Aorta (tissue), 5 donors: ENCODE measurements at regions of chr10 and their contacts with region 1.

Region 1: GRCh38 chr10:92573798-92574547 is at the start of gene IDE:
- DNase-seq: peak; percentile 91 to 95
- ATAC-seq: peak; percentile 96
- H3K4me3 ChIP-seq: peak within 1 kb of the TSS; percentile 90 to 95
- H3K27ac ChIP-seq: peak within 1 kb of the TSS; percentile 70 to 91
- H3K4me1 ChIP-seq: peaks cover 4 to 14% of the 10 kb centered on the region in 2 donors
- H3K27me3 ChIP-seq: no peaks in the 10 kb centered on the region
- total RNA-seq, gene IDE: 33.1 to 42.3 TPM

Region 2: GRCh38 chr10:92517034-92517655 is 56.8 kb before region 1 on chr10:
- intact Hi-C with region 1: loop called (anchors 1 kb)
- DNase-seq: no peak
- ATAC-seq: peak; percentile 85
- H3K4me3 ChIP-seq: no peak overlapping the region
- H3K27ac ChIP-seq: no peak overlapping the region
- H3K4me1 ChIP-seq: no peaks in the 10 kb centered on the region
- H3K27me3 ChIP-seq: no peaks in the 10 kb centered on the region

Region 3: DNA sequence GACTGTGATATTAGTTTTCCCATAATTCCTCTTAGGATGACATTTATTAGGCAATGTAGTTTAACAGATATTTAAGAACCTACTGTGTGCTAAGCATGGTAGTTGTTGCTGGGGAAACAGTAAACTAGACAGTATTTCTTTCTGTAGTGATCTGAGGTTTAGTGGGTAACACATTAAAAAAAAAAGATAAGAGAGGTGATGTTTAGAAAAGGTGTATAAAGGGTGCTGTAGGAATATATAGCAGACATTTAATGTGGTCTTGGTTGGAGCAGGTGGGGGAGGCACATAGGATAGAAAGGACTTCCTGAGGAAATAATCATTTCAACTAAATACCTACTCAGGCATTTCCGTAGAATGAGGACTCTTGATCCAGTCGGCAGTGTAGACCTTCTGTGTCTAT is 30.9 kb after region 1 on chr10:
- intact Hi-C with region 1: no loop called
- DNase-seq: no peak
- ATAC-seq: no peak
- H3K4me3 ChIP-seq: no peak overlapping the region
- H3K27ac ChIP-seq: no peak overlapping the region
- H3K4me1 ChIP-seq: no peaks in the 10 kb centered on the region
- H3K27me3 ChIP-seq: no peaks in the 10 kb centered on the region